Naive thymus-derived CD4-positive, alpha-beta T cell (primary cell): ENCODE measurements at regions of chr19 and their contacts with region 1.

Region 1: DNA sequence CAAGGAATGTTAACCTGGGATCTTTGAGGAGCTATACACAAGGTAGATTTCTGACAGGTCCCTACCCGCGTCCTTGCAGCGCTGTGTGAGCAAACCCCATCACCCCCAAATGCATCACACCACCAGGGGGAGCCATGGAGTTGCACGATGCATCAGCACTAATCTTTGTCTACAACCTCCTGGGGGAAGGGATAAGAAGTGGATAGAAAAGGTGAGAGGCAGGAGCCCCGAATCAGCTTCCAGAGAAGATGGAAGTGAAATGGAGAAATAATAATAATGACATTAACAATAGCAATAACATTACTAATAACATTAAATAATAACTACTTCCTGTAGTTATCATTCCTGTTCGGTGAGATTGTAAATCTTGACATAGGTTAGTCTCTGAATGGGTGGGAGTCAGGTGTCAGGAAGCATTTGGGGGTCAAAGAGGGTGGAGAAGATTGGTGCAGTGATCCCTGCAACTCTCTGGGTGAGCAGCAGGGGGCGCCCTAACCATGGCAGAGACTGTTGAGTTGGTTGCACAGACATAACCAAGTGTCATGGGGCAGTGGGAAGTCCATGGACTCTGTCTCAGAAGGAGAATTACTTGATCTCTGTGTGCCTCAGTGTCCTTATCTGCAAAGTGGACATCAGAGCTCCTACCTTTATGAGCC is 16.5 kb downstream of the SIGLEC7 start:
- DNase-seq: peak; percentile 21 to 82 (median 56)
- ATAC-seq: peak; percentile 89
- H3K4me3 ChIP-seq: no peak overlapping the region
- H3K4me3 Mint-ChIP-seq: no peak overlapping the region
- H3K27ac ChIP-seq: no peak overlapping the region
- H3K27ac Mint-ChIP-seq: peak overlapping the region in 1 of 9 donors; percentile 56
- H3K4me1 ChIP-seq: peaks cover 0 to 4% of the 10 kb centered on the region in 2 donors
- H3K4me1 Mint-ChIP-seq: peaks cover 0 to 24% (median 11%) of the 10 kb centered on the region in 7 donors
- H3K27me3 ChIP-seq: no peaks in the 10 kb centered on the region
- H3K27me3 Mint-ChIP-seq: peaks cover 0 to 24% (median 0%) of the 10 kb centered on the region in 5 donors

Region 2: GRCh38 chr19:51047031-51047335 is 111.6 kb before region 1 on chr19:
- CTCF ChIA-PET with region 1: no interaction called
- POLR2A ChIA-PET with region 1: no interaction called
- intact Hi-C with region 1: no loop called
- DNase-seq: no peak
- ATAC-seq: no peak
- H3K4me3 ChIP-seq: no peak overlapping the region
- H3K4me3 Mint-ChIP-seq: no peak overlapping the region
- H3K27ac ChIP-seq: no peak overlapping the region
- H3K27ac Mint-ChIP-seq: no peak overlapping the region
- H3K4me1 ChIP-seq: no peaks in the 10 kb centered on the region
- H3K4me1 Mint-ChIP-seq: no peaks in the 10 kb centered on the region
- H3K27me3 ChIP-seq: no peaks in the 10 kb centered on the region
- H3K27me3 Mint-ChIP-seq: peaks cover 11 to 25% (median 16%) of the 10 kb centered on the region in 5 donors

Region 3: DNA sequence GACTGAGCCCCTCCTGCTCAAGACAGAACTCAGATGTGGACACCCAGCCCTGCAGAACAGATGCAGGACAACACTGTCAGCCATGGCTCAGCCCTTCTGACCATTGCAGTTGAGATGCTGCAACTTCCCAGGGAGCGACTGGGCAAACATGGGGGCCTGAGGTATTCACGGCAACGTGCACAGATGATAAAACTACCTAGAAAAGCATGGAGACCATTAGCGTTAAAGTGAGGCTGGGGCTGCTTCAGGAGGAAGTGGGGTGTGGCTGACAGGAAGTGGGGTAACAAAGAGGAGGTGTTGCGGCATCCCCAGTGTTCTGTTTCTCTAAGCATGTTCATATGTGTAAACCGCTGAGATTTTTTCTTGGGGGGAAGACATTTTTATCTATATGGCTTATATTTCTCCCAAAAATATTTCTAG is 35.2 kb before region 1 on chr19:
- CTCF ChIA-PET with region 1: interaction called, 3 read pairs
- POLR2A ChIA-PET with region 1: interaction called, 3 read pairs
- intact Hi-C with region 1: loop called in 1 of 2 experiments (anchors 2 kb)
- DNase-seq: peak in 8 of 9 donors; percentile 35 to 80 (median 73)
- ATAC-seq: peak; percentile 77
- H3K4me3 ChIP-seq: peak overlapping the region; percentile 60
- H3K4me3 Mint-ChIP-seq: peak overlapping the region; percentile 67 to 87 (median 78)
- H3K27ac ChIP-seq: peak overlapping the region; percentile 66
- H3K27ac Mint-ChIP-seq: peak overlapping the region; percentile 82 to 97 (median 89)
- H3K4me1 ChIP-seq: peaks cover 45 to 85% of the 10 kb centered on the region in 2 donors
- H3K4me1 Mint-ChIP-seq: peaks cover 50 to 92% (median 83%) of the 10 kb centered on the region in 7 donors
- H3K27me3 ChIP-seq: no peaks in the 10 kb centered on the region
- H3K27me3 Mint-ChIP-seq: peaks cover 0 to 7% (median 0%) of the 10 kb centered on the region in 5 donors

Region 4: GRCh38 chr19:51168564-51169282 is 10.1 kb after region 1 on chr19:
- CTCF ChIA-PET with region 1: interaction called, 4 read pairs
- POLR2A ChIA-PET with region 1: no interaction called
- intact Hi-C with region 1: loop called in 1 of 2 experiments (anchors 1 kb)
- DNase-seq: no peak
- ATAC-seq: no peak
- H3K4me3 ChIP-seq: no peak overlapping the region
- H3K4me3 Mint-ChIP-seq: peak overlapping the region in 3 of 10 donors; percentile 12 to 77 (median 43)
- H3K27ac ChIP-seq: no peak overlapping the region
- H3K27ac Mint-ChIP-seq: peak overlapping the region in 2 of 9 donors; percentile 57 to 86
- H3K4me1 ChIP-seq: peaks cover 15 to 17% of the 10 kb centered on the region in 2 donors
- H3K4me1 Mint-ChIP-seq: peaks cover 10 to 41% (median 28%) of the 10 kb centered on the region in 7 donors
- H3K27me3 ChIP-seq: no peaks in the 10 kb centered on the region
- H3K27me3 Mint-ChIP-seq: peaks cover 0 to 27% (median 7%) of the 10 kb centered on the region in 5 donors

Region 5: DNA sequence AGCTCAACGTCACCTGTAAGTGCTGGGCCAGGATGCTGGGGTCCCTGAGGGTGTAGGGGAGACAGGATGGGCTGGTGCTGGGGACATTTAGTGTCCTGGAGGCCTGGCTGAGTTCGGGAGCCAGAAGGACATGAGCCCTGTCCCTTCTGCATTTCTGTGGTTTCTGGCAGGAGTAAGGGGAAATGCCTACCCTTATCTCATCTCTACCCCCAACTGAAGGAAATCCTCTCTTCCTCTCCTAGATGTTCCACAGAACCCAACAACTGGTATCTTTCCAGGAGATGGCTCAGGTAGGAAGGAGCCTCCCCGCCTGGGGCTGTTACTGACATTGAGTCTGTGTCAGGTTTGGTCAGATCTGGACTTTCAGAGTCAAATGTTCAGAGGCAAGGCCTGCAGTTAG is 67.5 kb after region 1 on chr19:
- CTCF ChIA-PET with region 1: no interaction called
- POLR2A ChIA-PET with region 1: no interaction called
- intact Hi-C with region 1: loop called in 1 of 2 experiments (anchors 2 kb)
- DNase-seq: no peak
- ATAC-seq: no peak
- H3K4me3 ChIP-seq: no peak overlapping the region
- H3K4me3 Mint-ChIP-seq: peak overlapping the region in 1 of 10 donors; percentile 73
- H3K27ac ChIP-seq: no peak overlapping the region
- H3K27ac Mint-ChIP-seq: peak overlapping the region in 1 of 9 donors; percentile 81
- H3K4me1 ChIP-seq: no peaks in the 10 kb centered on the region
- H3K4me1 Mint-ChIP-seq: peaks cover 0 to 38% (median 0%) of the 10 kb centered on the region in 7 donors
- H3K27me3 ChIP-seq: no peaks in the 10 kb centered on the region
- H3K27me3 Mint-ChIP-seq: peaks cover 40 to 73% (median 48%) of the 10 kb centered on the region in 5 donors

Region 6: GRCh38 chr19:51242881-51243630 is 84.5 kb after region 1 on chr19:
- CTCF ChIA-PET with region 1: no interaction called
- POLR2A ChIA-PET with region 1: no interaction called
- intact Hi-C with region 1: no loop called
- DNase-seq: no peak
- ATAC-seq: no peak
- H3K4me3 ChIP-seq: no peak overlapping the region
- H3K4me3 Mint-ChIP-seq: no peak overlapping the region
- H3K27ac ChIP-seq: no peak overlapping the region
- H3K27ac Mint-ChIP-seq: no peak overlapping the region
- H3K4me1 ChIP-seq: no peaks in the 10 kb centered on the region
- H3K4me1 Mint-ChIP-seq: peaks cover 0 to 30% (median 9%) of the 10 kb centered on the region in 7 donors
- H3K27me3 ChIP-seq: no peaks in the 10 kb centered on the region
- H3K27me3 Mint-ChIP-seq: peaks cover 14 to 26% (median 20%) of the 10 kb centered on the region in 5 donors

Region 7: DNA sequence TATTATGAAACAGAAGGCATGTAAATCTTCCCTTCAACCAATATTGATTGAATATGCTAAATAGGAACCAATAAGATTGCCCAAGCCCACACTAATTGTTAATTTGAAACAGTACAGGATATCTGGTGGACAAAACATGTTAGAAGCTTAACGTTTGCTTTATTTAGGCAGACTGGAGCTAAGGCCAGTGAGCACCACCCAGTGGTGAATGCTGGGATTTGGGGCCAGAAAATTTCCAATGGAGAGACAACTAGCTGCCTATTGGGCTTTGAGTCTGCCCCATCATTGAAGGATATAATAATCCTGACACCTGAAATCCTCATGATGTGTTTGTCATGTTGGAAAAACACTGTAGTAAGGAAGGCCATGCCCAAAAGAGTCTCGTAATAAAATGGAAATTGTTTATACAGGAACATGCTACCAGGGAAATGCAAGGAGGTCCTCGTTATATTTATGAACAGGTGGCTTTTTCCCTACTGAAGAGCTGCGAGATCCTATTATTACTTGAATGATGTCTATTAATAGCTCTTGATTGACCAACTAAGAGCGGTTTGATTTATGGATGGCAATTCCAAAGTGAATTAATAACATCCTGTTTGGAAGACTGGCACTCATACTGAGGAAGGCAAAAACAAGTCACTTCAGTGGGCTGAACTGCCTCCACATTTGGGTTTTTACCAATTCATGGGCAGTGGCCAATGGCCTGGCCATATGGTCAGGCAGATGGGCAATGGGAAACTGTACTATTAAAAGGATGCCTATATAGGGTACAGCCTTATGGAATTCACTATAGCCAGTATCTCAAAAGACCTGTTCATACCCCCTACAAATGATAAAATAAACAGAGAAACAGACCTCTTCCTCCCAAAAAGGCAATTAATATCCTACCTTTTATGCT is 101.0 kb after region 1 on chr19:
- CTCF ChIA-PET with region 1: no interaction called
- POLR2A ChIA-PET with region 1: no interaction called
- intact Hi-C with region 1: loop called in 1 of 2 experiments (anchors 1 kb)
- DNase-seq: peak in 6 of 9 donors; percentile 1 to 43 (median 8)
- ATAC-seq: peak; percentile 58
- H3K4me3 ChIP-seq: no peak overlapping the region
- H3K4me3 Mint-ChIP-seq: no peak overlapping the region
- H3K27ac ChIP-seq: no peak overlapping the region
- H3K27ac Mint-ChIP-seq: no peak overlapping the region
- H3K4me1 ChIP-seq: no peaks in the 10 kb centered on the region
- H3K4me1 Mint-ChIP-seq: peaks cover 0 to 38% (median 0%) of the 10 kb centered on the region in 7 donors
- H3K27me3 ChIP-seq: peaks cover 0 to 2% of the 10 kb centered on the region in 2 donors
- H3K27me3 Mint-ChIP-seq: peaks cover 16 to 50% (median 32%) of the 10 kb centered on the region in 5 donors

Region 8: DNA sequence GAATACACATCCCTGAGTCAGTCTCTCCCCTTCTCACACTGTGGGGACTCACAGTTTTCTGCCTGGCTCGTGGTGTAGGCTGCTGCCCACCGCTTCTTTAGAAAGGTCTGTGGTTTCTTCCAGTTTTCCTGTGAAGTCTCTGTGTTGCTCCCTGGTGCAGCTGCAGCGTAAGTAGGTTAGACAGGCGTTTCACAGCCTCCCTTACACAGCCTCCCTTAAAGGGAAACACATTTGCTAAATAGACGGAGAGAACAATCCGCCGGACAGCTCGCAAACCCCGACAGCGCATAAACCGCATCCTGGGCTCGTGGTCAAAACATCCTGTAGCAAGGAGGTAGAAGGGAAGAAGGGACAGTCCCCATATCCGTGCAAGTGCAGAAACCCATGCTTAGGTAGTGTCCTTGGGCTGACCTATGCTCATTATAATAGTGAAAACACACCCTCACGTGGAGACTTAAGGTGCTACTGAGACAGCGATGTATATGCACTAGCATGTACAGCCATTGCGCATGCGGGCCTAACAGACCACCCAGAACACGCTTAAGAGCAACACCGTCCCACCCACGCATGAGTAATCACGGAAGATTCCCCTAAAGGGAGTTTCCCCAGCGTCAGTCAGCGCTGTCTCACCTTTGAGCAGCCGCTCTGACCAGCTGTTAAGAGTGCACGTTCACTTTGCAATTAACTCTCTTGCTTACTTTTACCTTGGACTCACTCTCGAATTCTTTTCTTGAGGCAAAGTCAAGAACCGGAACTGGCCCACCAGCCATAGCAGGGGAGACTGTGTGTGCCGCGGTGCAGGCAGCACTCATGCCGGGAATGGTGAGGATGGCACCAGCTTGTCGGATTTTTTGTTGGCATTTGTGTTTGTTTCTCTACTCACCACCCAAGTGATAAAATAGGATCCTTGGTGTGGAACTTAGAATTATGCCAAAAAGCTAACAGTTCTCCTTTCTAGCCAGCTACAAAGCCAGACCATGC is 283.1 kb after region 1 on chr19:
- CTCF ChIA-PET with region 1: no interaction called
- POLR2A ChIA-PET with region 1: no interaction called
- intact Hi-C with region 1: loop called in 1 of 2 experiments (anchors 1 kb)
- DNase-seq: peak; percentile 27 to 87 (median 68)
- ATAC-seq: peak; percentile 91
- H3K4me3 ChIP-seq: peak overlapping the region; percentile 31
- H3K4me3 Mint-ChIP-seq: peak overlapping the region; percentile 74 to 92 (median 83)
- H3K27ac ChIP-seq: peak overlapping the region; percentile 53
- H3K27ac Mint-ChIP-seq: peak overlapping the region; percentile 49 to 88 (median 77)
- H3K4me1 ChIP-seq: peaks cover 22 to 24% of the 10 kb centered on the region in 2 donors
- H3K4me1 Mint-ChIP-seq: peaks cover 22 to 43% (median 34%) of the 10 kb centered on the region in 7 donors
- H3K27me3 ChIP-seq: peaks cover 0 to 4% of the 10 kb centered on the region in 2 donors
- H3K27me3 Mint-ChIP-seq: peaks cover 0 to 59% (median 5%) of the 10 kb centered on the region in 5 donors